A673 (cell line): ENCODE measurements at regions of chr18 and their contacts with region 1.

Region 1: GRCh38 chr18:53625997-53626599 is 598.4 kb downstream of the MBD2 start:
- DNase-seq: no peak
- H3K4me3 ChIP-seq: no peak overlapping the region
- H3K27ac ChIP-seq: no peak overlapping the region
- H3K4me1 ChIP-seq: no peaks in the 10 kb centered on the region
- H3K27me3 ChIP-seq: no peaks in the 10 kb centered on the region
- CTCF ChIP-seq: no peak

Region 2: GRCh38 chr18:54950221-54950620 is 1324.1 kb after region 1 on chr18:
- CTCF ChIA-PET with region 1: no interaction called
- POLR2A ChIA-PET with region 1: no interaction called
- intact Hi-C with region 1: no loop called
- DNase-seq: no peak
- H3K4me3 ChIP-seq: no peak overlapping the region
- H3K27ac ChIP-seq: no peak overlapping the region
- H3K4me1 ChIP-seq: no peaks in the 10 kb centered on the region
- H3K27me3 ChIP-seq: no peaks in the 10 kb centered on the region
- CTCF ChIP-seq: no peak

Region 3: GRCh38 chr18:55415258-55415871 is 1789.3 kb after region 1 on chr18:
- CTCF ChIA-PET with region 1: interaction called, 13 read pairs
- POLR2A ChIA-PET with region 1: no interaction called
- intact Hi-C with region 1: no loop called
- DNase-seq: peak; percentile 87
- H3K4me3 ChIP-seq: no peak overlapping the region
- H3K27ac ChIP-seq: no peak overlapping the region
- H3K4me1 ChIP-seq: peaks cover 72% of the 10 kb centered on the region
- H3K27me3 ChIP-seq: no peaks in the 10 kb centered on the region
- CTCF ChIP-seq: peak; percentile 99